PC-9 (cell line): ENCODE measurements at regions of chr17 and their contacts with region 1.

Region 1: GRCh38 chr17:66383333-66383732 is 80.9 kb downstream of the PRKCA start:
- DNase-seq: no peak
- H3K4me3 ChIP-seq: no peak overlapping the region
- H3K27ac ChIP-seq: no peak overlapping the region
- H3K4me1 ChIP-seq: peaks cover 36% of the 10 kb centered on the region
- H3K27me3 ChIP-seq: no peaks in the 10 kb centered on the region
- CTCF ChIP-seq: no peak

Region 2: GRCh38 chr17:66255112-66255511 is 128.2 kb before region 1 on chr17:
- CTCF ChIA-PET with region 1: no interaction called
- POLR2A ChIA-PET with region 1: no interaction called
- intact Hi-C with region 1: loop called (anchors 1 kb)
- DNase-seq: peak; percentile 34 to 79
- H3K4me3 ChIP-seq: no peak overlapping the region
- H3K27ac ChIP-seq: no peak overlapping the region
- H3K4me1 ChIP-seq: peaks cover 10% of the 10 kb centered on the region
- H3K27me3 ChIP-seq: no peaks in the 10 kb centered on the region
- CTCF ChIP-seq: peak; percentile 86

Region 3: DNA sequence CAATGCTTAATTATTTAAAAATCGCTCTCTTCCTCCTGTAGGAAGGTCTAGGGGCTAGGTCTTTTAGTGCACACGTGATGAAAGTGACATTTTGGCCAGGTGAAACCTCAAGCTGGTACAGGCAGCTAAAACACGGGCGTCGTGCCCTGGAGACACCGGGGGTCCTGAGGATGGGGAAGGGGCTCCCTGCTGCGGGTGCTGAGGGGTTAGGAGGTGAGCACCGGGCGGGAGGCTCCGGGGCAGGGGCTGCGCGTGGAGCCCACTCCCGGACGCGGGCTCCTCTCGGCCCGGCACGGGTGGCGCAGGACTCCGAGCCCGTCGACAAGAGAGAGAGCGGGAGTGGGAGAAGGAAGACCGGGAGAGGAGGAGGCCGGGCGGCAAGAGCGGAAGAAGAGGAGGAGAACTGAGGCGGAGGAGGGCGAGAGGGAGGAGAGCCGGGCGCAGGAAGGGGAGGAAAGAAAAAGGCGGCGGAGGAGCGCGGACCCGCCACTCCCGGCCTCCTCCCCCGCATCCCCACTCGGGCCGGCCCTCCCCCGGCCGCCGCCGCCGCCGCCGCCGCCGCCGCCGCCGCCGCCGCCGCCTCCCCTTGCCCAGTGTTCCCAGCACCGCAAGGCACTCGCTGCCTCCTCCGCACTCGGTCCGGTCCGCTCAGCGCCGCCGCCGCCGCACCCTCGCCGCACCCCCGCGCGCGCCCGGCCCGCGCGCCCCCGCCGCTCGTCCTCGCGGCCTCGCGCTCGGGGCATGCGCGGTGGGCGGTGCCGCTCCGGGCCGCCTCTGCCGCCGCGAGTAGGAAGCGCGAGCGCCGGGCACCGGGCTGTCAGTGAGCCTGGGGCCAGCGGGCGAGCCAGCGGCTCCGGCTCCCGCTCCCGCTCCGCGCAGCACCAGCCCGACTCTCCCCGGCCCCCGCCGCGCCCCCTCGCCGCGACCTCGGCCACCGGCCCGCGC is 81.3 kb before region 1 on chr17 and contains the start of gene PRKCA:
- CTCF ChIA-PET with region 1: no interaction called
- POLR2A ChIA-PET with region 1: interaction called, 4 read pairs
- intact Hi-C with region 1: loop called (anchors 2 kb)
- DNase-seq: peak in 1 of 2 experiments; percentile 83
- H3K4me3 ChIP-seq: peak within 1 kb of the TSS; percentile 96
- H3K27ac ChIP-seq: peak within 1 kb of the TSS; percentile 56
- H3K4me1 ChIP-seq: peaks cover 30% of the 10 kb centered on the region
- H3K27me3 ChIP-seq: no peaks in the 10 kb centered on the region
- CTCF ChIP-seq: no peak
- total RNA-seq, gene PRKCA: 23.1 and 23.8 TPM in 2 replicates

Region 4: DNA sequence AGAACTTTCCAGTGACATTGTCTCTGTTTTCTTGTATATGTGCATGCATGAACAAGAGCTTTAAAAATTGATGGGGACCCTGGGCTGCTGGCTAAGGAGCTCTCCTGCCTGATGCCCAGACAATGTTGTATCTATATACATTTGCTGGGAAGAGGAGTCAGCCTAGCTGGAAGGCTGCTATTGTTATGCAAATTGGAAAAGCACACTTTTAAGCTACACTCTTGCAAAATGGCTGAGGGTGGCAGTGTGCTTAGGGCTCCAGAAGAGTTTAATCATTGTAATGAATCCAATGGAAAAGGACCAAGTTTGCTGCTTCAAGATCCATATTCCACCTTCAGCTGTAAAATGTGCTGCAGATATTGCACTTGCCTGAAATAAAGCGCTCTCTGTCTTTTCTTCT is 90.9 kb after region 1 on chr17:
- CTCF ChIA-PET with region 1: interaction called, 16 read pairs
- POLR2A ChIA-PET with region 1: no interaction called
- intact Hi-C with region 1: no loop called
- DNase-seq: no peak
- H3K4me3 ChIP-seq: no peak overlapping the region
- H3K27ac ChIP-seq: no peak overlapping the region
- H3K4me1 ChIP-seq: peaks cover 18% of the 10 kb centered on the region
- H3K27me3 ChIP-seq: no peaks in the 10 kb centered on the region
- CTCF ChIP-seq: no peak

Region 5: DNA sequence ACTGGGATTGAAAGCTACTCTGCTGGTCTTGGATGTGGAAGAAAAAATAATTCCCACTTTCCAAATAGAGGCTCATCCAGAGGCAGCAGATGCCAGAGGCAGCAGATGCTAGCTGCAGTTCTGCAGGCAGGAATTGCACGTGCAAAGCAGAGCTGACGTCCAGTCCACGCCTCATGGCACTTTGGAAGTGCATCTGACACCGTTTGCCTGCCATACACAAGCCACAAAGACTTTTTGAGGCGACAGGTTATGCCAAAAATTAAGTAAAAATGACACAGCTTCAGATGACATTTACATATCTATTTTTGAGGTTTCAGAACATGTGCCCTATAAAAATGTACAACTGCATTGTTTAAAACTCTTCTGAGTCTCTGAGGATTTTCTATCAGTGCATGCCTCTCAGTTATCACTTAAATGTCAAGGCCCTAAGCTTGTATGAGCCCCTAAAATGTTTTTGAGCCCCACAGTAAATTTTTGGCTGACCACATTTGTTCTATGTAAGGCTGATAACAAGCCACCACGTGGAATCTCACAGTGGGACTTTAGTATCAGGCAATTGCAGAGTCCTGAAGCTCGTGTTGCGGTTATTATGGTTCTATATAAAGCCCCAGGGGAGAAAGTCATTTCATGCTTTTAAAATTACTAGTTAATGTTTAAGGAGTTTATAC is 158.3 kb after region 1 on chr17:
- CTCF ChIA-PET with region 1: no interaction called
- POLR2A ChIA-PET with region 1: no interaction called
- intact Hi-C with region 1: loop called (anchors 10 kb)
- DNase-seq: no peak
- H3K4me3 ChIP-seq: no peak overlapping the region
- H3K27ac ChIP-seq: no peak overlapping the region
- H3K4me1 ChIP-seq: peaks cover 9% of the 10 kb centered on the region; the same call in 1 of the 2 replicates
- H3K27me3 ChIP-seq: no peaks in the 10 kb centered on the region
- CTCF ChIP-seq: no peak

Region 6: DNA sequence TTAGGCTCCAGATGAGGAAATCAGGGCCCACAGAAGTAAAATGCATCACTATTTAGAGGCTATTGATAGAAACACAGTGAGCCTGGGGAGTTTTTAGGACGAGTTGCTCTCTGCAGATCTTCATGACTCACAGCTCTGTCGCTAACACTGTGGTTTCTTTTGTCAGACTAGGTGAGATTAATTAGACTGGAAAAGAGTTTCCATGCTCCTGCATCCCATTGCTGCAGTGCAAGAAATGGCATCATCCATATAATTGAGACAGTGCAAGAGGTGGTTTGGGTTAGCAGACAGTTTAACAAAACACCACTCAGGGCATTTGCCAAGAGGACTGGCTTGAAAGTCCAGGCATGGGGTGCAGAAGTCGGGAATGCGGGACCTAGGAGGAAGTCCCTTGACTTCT is 252.8 kb after region 1 on chr17:
- CTCF ChIA-PET with region 1: no interaction called
- POLR2A ChIA-PET with region 1: no interaction called
- intact Hi-C with region 1: loop called (anchors 5 kb)
- DNase-seq: peak; percentile 39 to 87
- H3K4me3 ChIP-seq: no peak overlapping the region
- H3K27ac ChIP-seq: peak overlapping the region; percentile 61
- H3K4me1 ChIP-seq: peaks cover 64% of the 10 kb centered on the region
- H3K27me3 ChIP-seq: no peaks in the 10 kb centered on the region
- CTCF ChIP-seq: no peak